Heart left ventricle (tissue), 16 donors: ENCODE measurements at regions of chr10 and their contacts with region 1.

Region 1: DNA sequence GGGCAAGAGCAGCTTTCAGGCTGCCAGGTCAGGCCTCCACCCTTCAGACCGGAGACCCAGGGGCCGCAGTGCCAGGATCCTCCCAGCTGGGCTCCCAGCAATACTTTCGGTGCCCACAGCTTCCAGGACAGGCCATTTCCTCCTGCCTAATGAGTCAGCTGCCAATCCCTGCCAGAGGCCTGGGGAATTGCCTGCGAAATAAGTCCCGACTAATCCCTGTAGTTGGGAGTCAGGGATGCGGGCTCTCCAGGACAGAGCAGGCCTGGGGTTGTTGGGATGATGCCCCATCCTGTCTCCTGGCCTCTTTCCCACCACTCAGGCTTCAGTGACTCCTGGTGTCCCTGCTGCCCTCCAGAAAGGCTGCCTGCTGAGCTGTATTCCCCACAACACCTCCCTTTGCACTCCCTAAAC is 143.5 kb upstream of the UNC5B start:
- DNase-seq: peak; percentile 65 to 85 (median 83)
- ATAC-seq: peak; percentile 69 to 83 (median 71)
- H3K4me3 ChIP-seq: no peak overlapping the region
- H3K27ac ChIP-seq: peak overlapping the region in 11 of 12 donors; percentile 7 to 84 (median 74)
- H3K4me1 ChIP-seq: peaks cover 0 to 50% (median 15%) of the 10 kb centered on the region in 12 donors
- H3K27me3 ChIP-seq: no peaks in the 10 kb centered on the region
- CTCF ChIP-seq: no peak
- POLR2A ChIP-seq: no peak

Region 2: DNA sequence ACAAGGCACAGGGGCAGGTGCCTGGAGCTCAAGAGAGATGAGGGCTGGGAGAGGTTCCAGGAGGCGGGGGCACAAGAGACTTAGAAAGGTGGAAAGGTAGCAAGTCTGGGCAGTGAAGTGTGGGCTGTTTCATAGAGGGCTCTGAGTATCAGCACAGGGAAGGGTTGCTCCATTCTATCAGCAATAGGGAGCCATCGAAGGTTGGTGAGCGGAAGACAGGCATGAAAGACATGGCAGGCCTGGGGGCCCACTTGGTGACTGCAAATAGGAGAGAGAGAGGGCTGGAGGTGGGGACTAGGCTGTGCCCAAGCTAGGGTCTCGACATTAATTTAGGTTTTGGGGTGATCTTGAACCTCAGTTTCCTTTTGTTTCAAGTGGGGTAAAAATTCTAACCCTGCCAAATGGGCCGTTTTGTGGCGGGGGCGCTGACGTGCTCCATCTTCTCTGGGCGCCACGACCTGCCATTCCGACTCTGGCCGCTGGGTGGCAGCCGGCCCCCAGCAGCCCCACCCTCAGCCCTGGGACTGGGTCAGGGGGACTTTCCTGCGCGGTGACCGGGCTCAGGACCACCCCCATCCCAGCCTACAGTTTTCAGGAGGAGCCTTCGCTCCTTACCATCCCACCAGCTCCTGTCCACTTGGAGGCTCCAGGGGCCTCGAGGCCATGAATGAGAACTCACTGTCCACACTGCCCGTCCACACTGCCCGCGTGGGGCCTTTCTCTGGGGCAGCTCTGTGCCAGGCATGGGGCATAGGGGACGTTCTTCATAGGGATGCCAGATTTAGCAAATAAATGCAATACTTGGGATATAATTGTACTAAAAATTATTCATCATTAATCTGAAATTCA is 143.3 kb before region 1 on chr10:
- intact Hi-C with region 1: loop called in 7 of 10 experiments (anchors 5 to 10 kb)
- DNase-seq: peak in 2 of 5 donors; percentile 44 to 61
- ATAC-seq: peak; percentile 66 to 85 (median 76)
- H3K4me3 ChIP-seq: no peak overlapping the region
- H3K27ac ChIP-seq: peak overlapping the region in 3 of 12 donors; percentile 12 to 36 (median 19)
- H3K4me1 ChIP-seq: peaks cover 0 to 11% (median 0%) of the 10 kb centered on the region in 12 donors
- H3K27me3 ChIP-seq: peaks cover 0 to 4% (median 0%) of the 10 kb centered on the region in 9 donors
- CTCF ChIP-seq: peak; percentile 87 to 99 (median 96)
- POLR2A ChIP-seq: no peak

Region 3: GRCh38 chr10:70931168-70931815 is 137.6 kb before region 1 on chr10:
- intact Hi-C with region 1: loop called in 7 of 10 experiments (anchors 5 to 10 kb)
- DNase-seq: peak in 1 of 5 donors; percentile 30
- ATAC-seq: no peak
- H3K4me3 ChIP-seq: no peak overlapping the region
- H3K27ac ChIP-seq: no peak overlapping the region
- H3K4me1 ChIP-seq: peaks cover 0 to 11% (median 2%) of the 10 kb centered on the region in 12 donors
- H3K27me3 ChIP-seq: peaks cover 0 to 12% (median 0%) of the 10 kb centered on the region in 9 donors
- CTCF ChIP-seq: no peak
- POLR2A ChIP-seq: no peak

Region 4: GRCh38 chr10:70940834-70941568 is 127.9 kb before region 1 on chr10:
- intact Hi-C with region 1: loop called in 4 of 10 experiments (anchors 5 to 10 kb)
- DNase-seq: peak; percentile 42 to 83 (median 59)
- ATAC-seq: peak; percentile 11 to 47 (median 28)
- H3K4me3 ChIP-seq: no peak overlapping the region
- H3K27ac ChIP-seq: peak overlapping the region in 5 of 12 donors; percentile 22 to 34 (median 29)
- H3K4me1 ChIP-seq: peaks cover 0 to 47% (median 14%) of the 10 kb centered on the region in 12 donors
- H3K27me3 ChIP-seq: no peaks in the 10 kb centered on the region
- CTCF ChIP-seq: no peak
- POLR2A ChIP-seq: no peak

Region 5: DNA sequence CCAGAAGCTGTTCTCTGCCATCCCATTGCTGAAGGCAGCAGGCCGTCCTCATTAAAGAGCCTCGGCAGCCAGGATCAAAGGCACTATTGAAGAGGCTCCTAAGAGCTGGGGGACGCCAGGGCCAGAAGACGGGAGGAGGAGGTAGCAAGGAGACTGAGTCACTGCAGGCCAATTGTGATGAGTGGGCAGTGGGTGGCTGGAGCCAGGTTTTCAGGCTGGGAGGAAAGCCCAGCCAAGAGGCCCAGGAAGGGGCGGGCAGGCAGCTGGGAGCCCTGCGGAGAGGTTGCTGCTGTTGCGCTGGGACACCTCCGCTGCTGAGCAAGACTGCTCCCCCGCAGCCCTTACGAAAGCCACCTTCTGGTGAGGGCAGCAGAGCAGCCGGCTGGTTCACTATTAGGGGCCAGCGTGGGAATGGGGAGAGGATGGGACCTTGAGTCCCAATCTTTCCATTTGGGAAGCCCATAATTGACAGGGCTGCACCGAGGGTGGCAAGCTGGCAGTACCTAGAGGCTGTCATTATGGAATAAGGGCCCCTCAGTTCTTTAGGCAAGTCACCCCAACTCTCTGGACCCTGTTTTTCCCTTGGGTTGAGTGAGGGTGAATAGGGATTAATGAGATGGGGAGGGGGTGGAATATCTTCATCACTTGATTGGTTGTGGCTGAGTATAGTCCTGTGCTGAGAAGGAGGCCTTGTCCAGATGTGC is 191.9 kb after region 1 on chr10:
- intact Hi-C with region 1: loop called in 3 of 10 experiments (anchors 5 to 10 kb)
- DNase-seq: peak in 4 of 5 donors; percentile 62 to 83 (median 74)
- ATAC-seq: peak; percentile 42 to 73 (median 60)
- H3K4me3 ChIP-seq: peak overlapping the region in 2 of 12 donors; percentile 6 to 21
- H3K27ac ChIP-seq: peak overlapping the region; percentile 15 to 90 (median 80)
- H3K4me1 ChIP-seq: peaks cover 15 to 98% (median 81%) of the 10 kb centered on the region in 12 donors
- H3K27me3 ChIP-seq: no peaks in the 10 kb centered on the region
- CTCF ChIP-seq: peak in 1 of 12 donors; percentile 7
- POLR2A ChIP-seq: no peak

Region 6: GRCh38 chr10:71270301-71271220 is 201.7 kb after region 1 on chr10:
- intact Hi-C with region 1: loop called in 2 of 10 experiments (anchors 10 kb)
- DNase-seq: peak in 2 of 5 donors; percentile 52 to 57
- ATAC-seq: peak; percentile 14 to 32 (median 26)
- H3K4me3 ChIP-seq: no peak overlapping the region
- H3K27ac ChIP-seq: peak overlapping the region in 6 of 12 donors; percentile 74 to 89 (median 84)
- H3K4me1 ChIP-seq: peaks cover 0 to 96% (median 64%) of the 10 kb centered on the region in 12 donors
- H3K27me3 ChIP-seq: no peaks in the 10 kb centered on the region
- CTCF ChIP-seq: peak; percentile 32 to 69 (median 56)
- POLR2A ChIP-seq: no peak